Breast epithelium (tissue), 4 donors: ENCODE measurements at regions of chr6 and their contacts with region 1.

Region 1: DNA sequence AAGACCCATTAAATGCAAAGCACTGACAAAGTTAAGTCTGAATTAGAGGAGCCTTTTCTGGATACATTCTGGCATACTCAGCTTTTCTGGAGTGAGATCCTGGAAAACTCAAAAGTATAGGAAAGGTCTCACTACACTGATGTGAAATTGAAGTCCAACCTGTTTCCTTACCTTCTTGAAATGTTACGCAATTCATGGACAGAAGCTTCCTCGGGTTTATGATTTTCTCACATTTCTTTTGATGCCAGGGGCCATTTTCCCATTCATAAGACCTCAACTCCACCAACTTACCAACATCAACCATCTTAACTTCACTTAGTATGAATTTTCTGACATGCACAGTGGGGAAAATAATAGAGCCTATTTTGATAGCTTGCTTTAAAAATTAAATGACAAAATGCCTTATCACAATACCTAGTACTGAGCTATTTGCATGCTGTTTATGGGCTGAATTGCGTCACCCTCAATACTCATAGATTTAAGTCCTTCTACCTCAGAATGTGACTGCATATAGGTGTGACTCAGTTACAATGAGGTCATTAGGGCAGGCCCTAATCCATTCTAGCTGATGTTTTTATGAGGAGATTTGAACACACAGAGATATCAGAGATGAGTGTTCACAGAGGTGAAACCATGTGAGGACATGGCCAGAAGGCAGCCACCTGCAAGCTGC is 73.4 kb upstream of the RAB32 start:
- DNase-seq: no peak
- H3K4me3 ChIP-seq: no peak overlapping the region
- H3K27ac ChIP-seq: no peak overlapping the region
- H3K4me1 ChIP-seq: no peaks in the 10 kb centered on the region
- H3K27me3 ChIP-seq: no peaks in the 10 kb centered on the region
- CTCF ChIP-seq: no peak
- POLR2A ChIP-seq: no peak

Region 2: DNA sequence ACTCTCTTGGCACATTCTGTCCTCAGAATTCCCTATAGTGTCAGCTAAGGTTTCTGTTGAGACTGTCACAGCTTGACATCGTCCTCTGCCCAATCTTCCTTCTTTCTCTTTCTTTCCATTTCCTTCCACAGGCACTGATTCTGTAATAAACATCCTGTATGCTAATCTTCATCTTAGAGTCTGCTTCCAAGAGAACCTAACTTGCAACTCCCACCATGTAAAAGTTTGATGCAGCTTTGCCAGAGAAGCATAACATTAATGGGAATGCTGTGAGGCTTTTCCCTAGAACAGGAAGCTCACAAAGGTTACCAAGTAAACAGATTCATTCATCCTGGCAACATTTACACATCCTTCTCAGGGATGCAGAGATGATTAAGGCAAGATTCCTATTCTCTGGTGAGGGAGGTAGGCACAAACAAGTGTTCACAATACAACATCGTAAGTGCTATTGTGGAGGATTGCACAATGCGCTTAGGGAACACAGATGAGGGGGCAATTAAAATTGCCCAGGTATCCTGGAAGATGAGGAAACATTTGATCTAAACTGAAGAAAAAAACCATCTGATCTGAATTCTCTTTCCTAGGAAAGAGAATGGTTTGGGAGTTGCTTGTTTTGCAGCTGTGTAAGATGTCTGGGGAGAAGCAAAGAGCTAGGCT is 366.7 kb before region 1 on chr6:
- intact Hi-C with region 1: no loop called
- DNase-seq: no peak
- H3K4me3 ChIP-seq: no peak overlapping the region
- H3K27ac ChIP-seq: no peak overlapping the region
- H3K4me1 ChIP-seq: no peaks in the 10 kb centered on the region
- H3K27me3 ChIP-seq: no peaks in the 10 kb centered on the region
- CTCF ChIP-seq: no peak
- POLR2A ChIP-seq: no peak

Region 3: GRCh38 chr6:146381486-146381885 is 88.7 kb before region 1 on chr6:
- intact Hi-C with region 1: no loop called
- DNase-seq: no peak
- H3K4me3 ChIP-seq: no peak overlapping the region
- H3K27ac ChIP-seq: no peak overlapping the region
- H3K4me1 ChIP-seq: no peaks in the 10 kb centered on the region
- H3K27me3 ChIP-seq: no peaks in the 10 kb centered on the region
- CTCF ChIP-seq: no peak
- POLR2A ChIP-seq: no peak

Region 4: GRCh38 chr6:146397641-146398040 is 72.6 kb before region 1 on chr6:
- intact Hi-C with region 1: loop called (anchors 2 kb)
- DNase-seq: no peak
- H3K4me3 ChIP-seq: no peak overlapping the region
- H3K27ac ChIP-seq: no peak overlapping the region
- H3K4me1 ChIP-seq: no peaks in the 10 kb centered on the region
- H3K27me3 ChIP-seq: no peaks in the 10 kb centered on the region
- CTCF ChIP-seq: no peak
- POLR2A ChIP-seq: no peak